ENCODE measurements at regions of chr7 and their contacts with region 1.

Region 1: DNA sequence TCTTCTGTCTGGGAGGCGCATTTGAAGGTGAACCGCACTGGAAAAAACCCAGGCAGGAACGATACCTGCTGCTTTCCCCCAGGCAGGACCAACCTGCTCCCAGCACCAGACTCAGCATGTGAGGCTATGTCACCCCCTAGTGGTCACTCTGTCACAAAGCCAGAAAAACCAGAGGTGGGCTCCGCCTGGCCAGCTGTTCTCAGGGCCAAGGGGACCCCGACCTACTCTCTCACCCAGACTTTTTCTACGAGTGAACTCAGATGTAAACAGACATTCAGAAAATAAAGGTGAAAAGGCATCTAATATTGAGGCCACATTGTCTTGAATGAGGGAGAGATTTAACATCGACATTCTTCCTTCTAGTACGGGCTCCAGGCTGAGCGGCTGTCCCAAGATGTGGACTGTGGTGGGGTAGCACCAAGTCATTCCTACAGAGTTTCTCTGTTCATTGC is 117.3 kb downstream of the PRKAG2 start:
- DNase-seq: peak; percentile 71 to 86
- ATAC-seq: peak; percentile 71 to 88
- H3K4me3 ChIP-seq: no peak overlapping the region
- H3K27ac ChIP-seq: peak overlapping the region; percentile 35 to 96; a peak in 4 of 6 replicates
- H3K4me1 ChIP-seq: peaks cover 35% of the 10 kb centered on the region
- CTCF ChIP-seq: peak; percentile 97
- EP300 ChIP-seq: no peak
- POLR2A ChIP-seq: no peak
- RAD21 ChIP-seq: peak; percentile 98

Region 2: GRCh38 chr7:151368136-151368571 is 391.5 kb before region 1 on chr7:
- CTCF ChIA-PET with region 1: interaction called, 25 read pairs
- POLR2A ChIA-PET with region 1: no interaction called
- DNase-seq: peak; percentile 76 to 77
- ATAC-seq: peak; percentile 99 to 100
- H3K4me3 ChIP-seq: no peak overlapping the region
- H3K27ac ChIP-seq: peak overlapping the region in 1 of 2 experiments; percentile 32; a peak in 1 of 6 replicates
- H3K4me1 ChIP-seq: peaks cover 4% of the 10 kb centered on the region
- CTCF ChIP-seq: peak; percentile 90
- EP300 ChIP-seq: no peak
- POLR2A ChIP-seq: no peak
- RAD21 ChIP-seq: peak; percentile 85 to 89

Region 3: DNA sequence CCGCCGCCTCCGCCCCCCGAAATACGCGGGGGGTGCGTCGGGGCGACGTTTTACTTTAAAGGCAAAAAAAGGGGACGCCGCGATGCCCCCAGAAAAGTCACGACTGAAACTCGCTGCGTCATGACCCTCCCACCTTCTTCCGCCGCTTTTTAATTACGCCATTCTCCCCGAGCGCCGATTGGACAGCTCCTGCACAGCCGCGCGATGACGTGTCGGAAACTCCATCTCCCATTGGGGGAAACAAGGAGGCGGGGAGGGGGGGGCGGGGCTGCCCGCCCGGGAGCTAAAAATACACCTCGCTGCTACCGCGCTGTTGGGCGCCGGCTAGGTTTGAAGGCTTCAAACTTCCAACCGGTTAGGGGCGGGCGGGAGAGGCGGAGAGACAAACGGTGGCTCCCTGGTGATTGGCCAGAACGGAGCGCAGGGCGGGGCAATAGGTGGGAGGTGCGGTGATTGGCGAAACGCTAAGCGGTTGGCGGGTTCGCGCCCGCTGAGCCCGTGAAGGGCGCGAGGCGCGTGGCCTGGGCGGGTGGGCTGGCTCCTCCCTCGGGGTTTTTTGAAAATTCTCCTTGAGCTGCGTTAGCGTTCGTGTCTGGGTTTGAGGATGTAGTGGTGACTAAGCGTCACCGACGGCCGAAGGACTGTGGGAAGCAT is 239.7 kb before region 1 on chr7 and contains the start of gene RHEB:
- CTCF ChIA-PET with region 1: interaction called, 13 read pairs
- POLR2A ChIA-PET with region 1: interaction called, 3 read pairs
- DNase-seq: peak; percentile 92 to 99
- ATAC-seq: peak; percentile 84 to 94
- H3K4me3 ChIP-seq: peak within 1 kb of the TSS; percentile 65
- H3K27ac ChIP-seq: peak within 1 kb of the TSS; percentile 97 to 99
- H3K4me1 ChIP-seq: peaks cover 23% of the 10 kb centered on the region
- CTCF ChIP-seq: no peak
- EP300 ChIP-seq: no peak
- POLR2A ChIP-seq: no peak
- RAD21 ChIP-seq: no peak
- polyA plus RNA-seq, gene RHEB: 148 and 198 TPM in 2 replicates

Region 4: GRCh38 chr7:151579644-151580043 is 180.0 kb before region 1 on chr7:
- CTCF ChIA-PET with region 1: interaction called, 155 read pairs
- POLR2A ChIA-PET with region 1: no interaction called
- DNase-seq: peak in 1 of 2 experiments; percentile 55
- ATAC-seq: no peak
- H3K4me3 ChIP-seq: no peak overlapping the region
- H3K27ac ChIP-seq: no peak overlapping the region
- H3K4me1 ChIP-seq: no peaks in the 10 kb centered on the region
- CTCF ChIP-seq: no peak
- EP300 ChIP-seq: no peak
- POLR2A ChIP-seq: no peak
- RAD21 ChIP-seq: no peak

Region 5: DNA sequence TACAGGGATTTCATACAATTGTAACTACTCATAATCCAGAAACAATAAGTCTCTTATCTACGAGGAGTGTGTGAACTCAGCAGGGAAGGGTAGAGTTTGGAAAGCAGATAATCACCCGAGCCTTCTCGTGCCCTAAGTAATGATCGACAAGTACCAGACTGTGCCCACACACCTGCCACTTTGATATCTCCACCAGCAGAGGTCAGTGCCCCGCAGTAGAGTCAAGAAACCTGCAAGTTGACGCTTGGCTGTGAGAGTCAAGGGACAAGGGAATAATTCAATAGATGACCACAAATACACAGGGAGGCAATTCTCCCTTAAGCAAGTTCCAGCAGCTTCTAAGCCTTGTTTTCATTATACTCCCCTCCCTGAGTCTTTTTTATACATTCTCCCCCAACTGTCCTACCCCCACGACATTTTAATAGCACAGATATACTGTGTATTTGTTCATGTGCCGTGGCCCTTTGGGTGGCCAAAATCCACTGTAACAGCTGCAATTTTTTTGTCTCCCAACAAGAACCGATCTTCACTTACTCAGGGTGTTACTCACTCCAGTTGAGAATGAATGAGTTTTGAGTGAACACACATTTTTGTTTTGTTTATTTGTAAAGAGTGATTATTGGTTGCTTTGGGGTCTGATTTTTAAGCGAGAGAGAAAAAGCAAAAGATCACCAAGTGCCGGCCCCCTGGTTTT is 133.0 kb before region 1 on chr7:
- CTCF ChIA-PET with region 1: interaction called, 173 read pairs
- POLR2A ChIA-PET with region 1: interaction called, 6 read pairs
- DNase-seq: peak; percentile 71 to 76
- ATAC-seq: peak; percentile 80 to 91; a peak in 5 of 6 replicates
- H3K4me3 ChIP-seq: no peak overlapping the region
- H3K27ac ChIP-seq: peak overlapping the region in 1 of 2 experiments; percentile 29; a peak in 2 of 6 replicates
- H3K4me1 ChIP-seq: peaks cover 29% of the 10 kb centered on the region
- CTCF ChIP-seq: peak; percentile 75
- EP300 ChIP-seq: no peak
- POLR2A ChIP-seq: no peak
- RAD21 ChIP-seq: peak; percentile 77 to 84

Region 6: GRCh38 chr7:151717415-151717814 is 42.2 kb before region 1 on chr7:
- CTCF ChIA-PET with region 1: interaction called, 12 read pairs
- POLR2A ChIA-PET with region 1: no interaction called
- DNase-seq: no peak
- ATAC-seq: no peak
- H3K4me3 ChIP-seq: no peak overlapping the region
- H3K27ac ChIP-seq: peak overlapping the region in 1 of 2 experiments; percentile 29; a peak in 3 of 6 replicates
- H3K4me1 ChIP-seq: peaks cover 31% of the 10 kb centered on the region
- CTCF ChIP-seq: no peak
- EP300 ChIP-seq: no peak
- POLR2A ChIP-seq: no peak
- RAD21 ChIP-seq: no peak

Region 7: GRCh38 chr7:151744656-151745638 is 14.7 kb before region 1 on chr7:
- CTCF ChIA-PET with region 1: interaction called, 47 read pairs
- POLR2A ChIA-PET with region 1: interaction called, 4 read pairs
- DNase-seq: peak; percentile 92 to 93
- ATAC-seq: peak; percentile 92 to 94
- H3K4me3 ChIP-seq: no peak overlapping the region
- H3K27ac ChIP-seq: peak overlapping the region; percentile 87
- H3K4me1 ChIP-seq: peaks cover 64% of the 10 kb centered on the region
- CTCF ChIP-seq: peak; percentile 51
- EP300 ChIP-seq: peak; percentile 84 to 92; a peak in 3 of 5 replicates
- POLR2A ChIP-seq: no peak
- RAD21 ChIP-seq: peak; percentile 52 to 72